ENCODE measurements at regions of chrX and their contacts with region 1.

Region 1: GRCh38 chrX:136880452-136881013 is at the start of gene RBMX:
- DNase-seq: peak; percentile 95
- total RNA-seq, gene RBMX: 96.8 to 115 TPM

Region 2: DNA sequence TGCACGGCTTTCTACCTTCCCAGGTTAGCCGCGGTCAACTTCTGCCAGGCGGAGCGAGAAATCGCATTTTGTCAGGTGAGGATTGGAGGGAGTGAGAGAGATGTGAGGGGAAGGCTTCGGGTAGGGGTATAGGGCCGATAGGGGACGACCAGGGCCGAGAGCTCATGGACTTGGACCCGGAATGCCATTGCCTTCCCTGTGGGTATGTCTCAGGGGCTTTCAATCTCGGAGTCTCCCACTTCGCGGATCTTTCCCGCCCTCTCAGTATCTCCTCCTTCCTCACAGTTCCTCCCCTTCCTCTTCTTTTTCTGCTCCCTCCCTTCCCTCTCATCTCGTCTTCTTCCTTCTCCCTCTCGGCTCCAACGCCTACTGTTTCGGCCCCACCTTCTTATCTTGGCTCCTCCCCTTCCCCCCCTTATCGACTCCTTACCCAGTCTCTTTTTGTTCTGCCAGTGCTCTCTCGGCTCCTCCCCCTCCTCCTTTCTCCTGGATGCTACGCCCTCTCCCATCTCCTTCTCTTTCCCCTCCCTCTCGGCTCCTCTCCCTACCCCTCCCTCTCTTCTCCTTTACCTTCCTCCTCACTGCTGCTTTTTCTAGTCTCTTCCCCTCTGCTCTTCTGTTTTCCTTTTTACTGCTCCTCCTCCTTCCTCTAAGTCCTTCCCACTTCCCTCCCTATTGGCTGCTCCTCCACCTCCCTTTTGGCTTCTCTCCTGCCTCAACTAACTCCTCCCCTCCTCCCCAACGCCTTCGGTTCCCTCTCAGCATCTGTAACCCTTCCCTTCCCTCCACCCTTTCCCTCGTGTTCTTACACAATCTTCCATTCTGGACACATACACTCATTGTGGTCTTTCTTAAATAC is 29.4 kb after region 1 on chrX:
- intact Hi-C with region 1: loop called in 1 of 2 experiments (anchors 2 kb)
- DNase-seq: peak; percentile 87